Activated CD4-positive, alpha-beta T cell treated with anti-CD3 and anti-CD28 coated beads, Interleukin-2, amount 10 ng/mL, durations not matched to agents 7 days and 5 days (primary cell): ENCODE measurements at regions of chr3 and their contacts with region 1.

Region 1: DNA sequence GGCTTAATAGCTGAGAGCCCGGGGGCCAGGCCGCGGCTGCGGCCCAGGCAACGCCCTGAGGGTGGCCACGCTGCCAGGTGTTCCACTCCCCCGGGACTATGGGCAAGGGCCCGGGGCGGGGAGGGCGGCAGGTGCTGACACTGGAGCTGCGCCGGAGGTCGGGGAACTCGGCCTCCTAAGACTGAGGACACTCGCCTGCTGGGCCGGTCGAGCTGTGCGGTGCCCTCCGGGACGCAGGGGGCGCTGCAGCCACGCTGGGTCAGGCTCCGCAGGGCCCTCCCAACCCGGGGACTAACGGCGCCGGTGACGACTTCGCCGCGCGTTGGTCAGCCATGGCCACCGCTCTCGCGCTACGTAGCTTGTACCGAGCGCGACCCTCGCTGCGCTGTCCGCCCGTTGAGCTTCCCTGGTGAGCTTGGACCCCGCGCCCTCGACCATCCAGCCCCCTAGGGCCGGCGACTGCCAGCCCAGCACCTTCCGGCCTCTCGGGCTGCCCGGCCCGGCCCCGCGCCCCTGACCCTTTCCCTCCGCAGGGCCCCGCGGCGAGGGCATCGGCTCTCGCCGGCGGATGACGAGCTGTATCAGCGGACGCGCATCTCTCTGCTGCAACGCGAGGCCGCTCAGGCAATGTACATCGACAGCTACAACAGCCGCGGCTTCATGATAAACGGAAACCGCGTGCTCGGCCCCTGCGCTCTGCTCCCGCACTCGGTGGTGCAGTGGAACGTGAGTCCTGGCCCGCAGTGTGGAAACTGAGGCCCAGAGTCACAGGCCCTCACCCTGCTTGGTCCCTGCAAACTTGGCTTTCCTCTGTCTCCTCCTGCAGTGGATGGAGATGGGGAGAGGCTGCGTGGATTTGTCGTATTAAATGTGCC is at the start of gene NDUFAF3:
- DNase-seq: peak; percentile 91
- H3K4me3 Mint-ChIP-seq: peak within 1 kb of the TSS; percentile 87
- H3K27ac Mint-ChIP-seq: peak within 1 kb of the TSS; percentile 99
- H3K4me1 Mint-ChIP-seq: peaks cover 56% of the 10 kb centered on the region
- H3K27me3 Mint-ChIP-seq: no peaks in the 10 kb centered on the region
- total RNA-seq, gene NDUFAF3: 84.5 to 93.2 TPM

Region 2: GRCh38 chr3:48655606-48656005 is 366.4 kb before region 1 on chr3:
- CTCF ChIA-PET with region 1: no interaction called
- POLR2A ChIA-PET with region 1: no interaction called
- DNase-seq: peak; percentile 64
- H3K4me3 Mint-ChIP-seq: peak overlapping the region; percentile 64
- H3K27ac Mint-ChIP-seq: peak overlapping the region; percentile 89
- H3K4me1 Mint-ChIP-seq: peaks cover 24% of the 10 kb centered on the region
- H3K27me3 Mint-ChIP-seq: no peaks in the 10 kb centered on the region

Region 3: GRCh38 chr3:48989796-48990635 is 32.0 kb before region 1 on chr3 and contains the start of gene P4HTM:
- CTCF ChIA-PET with region 1: interaction called, 23 read pairs
- POLR2A ChIA-PET with region 1: interaction called, 5 read pairs
- DNase-seq: peak; percentile 65
- H3K4me3 Mint-ChIP-seq: peak within 1 kb of the TSS; percentile 91
- H3K27ac Mint-ChIP-seq: peak within 1 kb of the TSS; percentile 95
- H3K4me1 Mint-ChIP-seq: peaks cover 56% of the 10 kb centered on the region
- H3K27me3 Mint-ChIP-seq: no peaks in the 10 kb centered on the region
- total RNA-seq, gene P4HTM: 45.3 to 47.6 TPM

Region 4: DNA sequence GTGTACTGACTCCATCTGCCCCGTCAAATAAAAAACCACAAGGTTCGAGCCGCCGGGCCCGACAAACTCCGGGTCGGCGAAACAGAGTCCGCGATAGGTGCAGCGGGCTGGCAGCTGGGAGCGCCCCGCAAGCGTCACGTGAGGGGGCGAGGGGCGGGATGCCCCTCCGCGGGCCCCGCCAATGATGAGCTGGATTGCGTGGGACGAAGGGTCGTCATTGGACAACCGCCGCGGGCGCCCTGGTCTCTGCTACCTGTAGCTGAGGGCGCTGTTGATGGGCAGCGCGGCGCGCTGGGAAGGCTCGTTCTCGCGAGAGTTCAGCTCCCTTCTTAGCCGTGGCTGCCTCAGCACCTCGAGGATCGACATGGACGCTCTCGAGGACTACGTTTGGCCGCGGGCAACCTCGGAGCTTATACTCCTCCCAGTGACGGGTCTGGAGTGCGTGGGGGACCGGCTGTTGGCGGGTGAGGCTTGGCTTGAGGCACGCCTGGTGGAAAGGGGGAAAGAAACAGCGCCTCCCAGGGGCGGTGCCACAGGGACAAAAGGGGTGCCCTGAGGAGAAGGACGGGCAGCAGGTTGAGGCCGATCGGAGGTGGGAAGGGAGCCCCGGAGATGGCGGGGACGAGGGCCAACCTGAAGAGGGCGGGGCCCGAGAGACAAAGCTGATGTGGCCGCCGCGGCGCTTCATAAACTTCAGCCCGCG is 14.8 kb before region 1 on chr3 and contains the start of gene WDR6:
- CTCF ChIA-PET with region 1: interaction called, 100 read pairs
- POLR2A ChIA-PET with region 1: interaction called, 21 read pairs
- DNase-seq: peak; percentile 98
- H3K4me3 Mint-ChIP-seq: peak within 1 kb of the TSS; percentile 99
- H3K27ac Mint-ChIP-seq: peak within 1 kb of the TSS; percentile 100
- H3K4me1 Mint-ChIP-seq: peaks cover 37% of the 10 kb centered on the region
- H3K27me3 Mint-ChIP-seq: no peaks in the 10 kb centered on the region
- total RNA-seq, gene WDR6: 144 to 157 TPM

Region 5: GRCh38 chr3:49032646-49033304 is 10.7 kb after region 1 on chr3:
- CTCF ChIA-PET with region 1: interaction called, 31 read pairs
- POLR2A ChIA-PET with region 1: interaction called, 4 read pairs
- DNase-seq: no peak
- H3K4me3 Mint-ChIP-seq: no peak overlapping the region
- H3K27ac Mint-ChIP-seq: no peak overlapping the region
- H3K4me1 Mint-ChIP-seq: peaks cover 17% of the 10 kb centered on the region
- H3K27me3 Mint-ChIP-seq: no peaks in the 10 kb centered on the region